Activated naive CD4-positive, alpha-beta T cell treated with anti-CD3 and anti-CD28 coated beads for 36 hours (primary cell): ENCODE measurements at regions of chrX and their contacts with region 1.

Region 1: DNA sequence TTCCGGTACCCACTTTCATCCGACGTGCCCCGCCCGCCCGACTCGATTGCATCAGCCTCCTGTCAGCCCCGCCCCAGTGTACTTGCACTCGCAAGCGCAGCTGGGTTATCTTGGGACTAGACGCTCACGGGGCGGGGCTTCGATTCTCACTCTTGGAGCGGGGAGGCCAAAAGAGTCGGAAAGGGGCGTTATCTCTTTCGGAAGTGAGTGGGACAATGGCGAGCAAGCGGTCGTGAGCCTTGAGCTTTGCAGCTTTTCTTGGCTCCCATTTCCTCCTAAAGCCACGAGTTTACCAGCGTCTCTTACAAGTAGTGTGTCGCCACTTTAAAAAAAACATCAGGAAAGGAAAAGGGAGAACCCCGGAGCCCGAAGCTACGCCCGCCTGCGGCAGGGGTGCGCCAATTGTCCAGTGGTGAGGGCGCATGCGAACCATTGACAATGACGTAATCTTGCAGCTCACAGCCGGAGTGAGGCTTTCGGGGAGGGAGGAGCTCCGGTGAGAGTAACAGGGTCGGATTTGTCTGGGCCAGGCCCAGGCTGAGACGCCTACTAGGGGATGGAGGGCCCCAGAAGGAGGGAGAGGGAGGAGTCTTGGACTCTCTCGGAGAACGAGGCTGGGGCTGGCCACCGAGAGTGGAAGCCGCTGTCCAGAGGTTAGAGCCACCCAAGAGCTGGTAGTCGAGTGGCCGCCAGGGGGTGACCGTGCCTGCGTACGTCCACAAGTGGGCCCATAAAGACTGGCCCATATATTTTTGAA is 109.5 kb downstream of the GNL3L start:
- DNase-seq: peak; percentile 97
- H3K4me3 Mint-ChIP-seq: peak overlapping the region; percentile 84
- H3K27ac Mint-ChIP-seq: peak overlapping the region; percentile 99
- H3K4me1 Mint-ChIP-seq: peaks cover 5% of the 10 kb centered on the region
- H3K27me3 Mint-ChIP-seq: no peaks in the 10 kb centered on the region

Region 2: GRCh38 chrX:53422086-53422860 is 1217.3 kb before region 1 on chrX and contains the start of gene SMC1A:
- CTCF ChIA-PET with region 1: no interaction called
- intact Hi-C with region 1: loop called (anchors 2 kb)
- DNase-seq: peak; percentile 97
- H3K4me3 Mint-ChIP-seq: peak within 1 kb of the TSS; percentile 88
- H3K27ac Mint-ChIP-seq: peak within 1 kb of the TSS; percentile 97
- H3K4me1 Mint-ChIP-seq: peaks cover 30% of the 10 kb centered on the region
- H3K27me3 Mint-ChIP-seq: no peaks in the 10 kb centered on the region
- total RNA-seq, gene SMC1A: 169 to 170 TPM

Region 3: GRCh38 chrX:54044126-54044876 is 595.2 kb before region 1 on chrX and contains the start of gene PHF8:
- CTCF ChIA-PET with region 1: no interaction called
- intact Hi-C with region 1: loop called (anchors 1 kb)
- DNase-seq: peak; percentile 95
- H3K4me3 Mint-ChIP-seq: peak within 1 kb of the TSS; percentile 89
- H3K27ac Mint-ChIP-seq: peak within 1 kb of the TSS; percentile 95
- H3K4me1 Mint-ChIP-seq: peaks cover 19% of the 10 kb centered on the region
- H3K27me3 Mint-ChIP-seq: no peaks in the 10 kb centered on the region
- total RNA-seq, gene PHF8: 51.7 to 53.2 TPM

Region 4: DNA sequence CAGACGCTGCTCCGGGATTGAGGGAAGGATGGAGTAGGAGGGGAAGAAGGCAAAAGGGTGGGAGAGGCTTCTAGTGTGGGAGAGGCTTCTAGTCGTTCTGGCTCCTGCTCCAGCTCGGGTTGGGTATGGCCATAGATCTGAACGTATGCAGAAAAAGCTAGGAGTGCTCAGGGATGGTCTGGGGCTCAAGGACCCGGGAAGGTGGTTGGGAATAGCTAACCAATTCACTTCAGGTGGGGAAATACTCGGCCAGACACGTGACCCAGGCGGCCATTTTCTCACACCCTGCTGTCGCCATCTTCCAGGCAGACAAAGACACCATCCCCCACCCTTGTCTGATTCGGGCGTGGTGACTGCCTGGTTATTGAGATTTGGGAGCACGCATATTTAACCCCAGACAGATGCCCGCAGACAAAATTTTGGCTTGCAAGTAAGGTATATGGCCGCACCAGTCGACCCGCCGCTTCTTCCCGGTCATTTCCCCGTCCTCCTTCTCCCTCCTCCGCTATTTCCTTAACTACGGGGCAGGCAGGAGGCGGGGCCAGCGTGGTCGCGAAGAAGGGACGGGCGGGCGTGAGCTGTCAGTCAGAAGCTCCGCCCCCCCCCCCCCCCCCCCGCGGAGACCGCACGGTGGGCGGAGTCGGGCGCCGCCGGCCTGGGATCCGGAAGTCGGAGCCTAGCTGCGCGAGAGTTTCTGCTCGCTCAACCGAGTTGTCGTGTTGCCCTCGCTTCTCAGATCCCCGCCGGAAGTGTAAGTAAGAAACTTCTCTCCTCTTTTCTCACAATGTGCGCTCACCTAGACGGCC is 109.8 kb before region 1 on chrX and contains the start of gene GNL3L:
- CTCF ChIA-PET with region 1: no interaction called
- intact Hi-C with region 1: loop called (anchors 1 kb)
- DNase-seq: peak; percentile 84
- H3K4me3 Mint-ChIP-seq: peak within 1 kb of the TSS; percentile 90
- H3K27ac Mint-ChIP-seq: peak within 1 kb of the TSS; percentile 98
- H3K4me1 Mint-ChIP-seq: peaks cover 31% of the 10 kb centered on the region
- H3K27me3 Mint-ChIP-seq: no peaks in the 10 kb centered on the region
- total RNA-seq, gene GNL3L: 47.6 to 47.9 TPM

Region 5: DNA sequence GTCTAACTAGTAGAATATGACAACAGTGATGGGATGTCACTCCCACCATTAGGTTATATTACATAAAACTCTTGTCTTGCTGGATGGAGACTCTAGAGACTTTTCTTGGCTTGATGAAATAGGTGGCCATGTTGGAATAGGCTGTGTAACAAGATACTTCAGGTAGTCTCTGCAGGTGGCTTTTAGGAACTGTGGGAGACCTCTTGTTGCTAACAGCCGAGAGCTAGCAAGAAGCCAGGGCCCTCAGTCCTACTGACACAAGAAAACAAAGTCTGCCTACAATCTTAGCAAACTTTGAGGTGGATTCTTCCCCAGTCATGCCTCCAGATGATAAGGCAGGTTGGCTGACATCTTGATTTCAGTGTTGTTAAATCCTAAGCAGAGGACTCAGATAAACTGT is 37.0 kb before region 1 on chrX:
- CTCF ChIA-PET with region 1: no interaction called
- intact Hi-C with region 1: no loop called
- DNase-seq: no peak
- H3K4me3 Mint-ChIP-seq: no peak overlapping the region
- H3K27ac Mint-ChIP-seq: no peak overlapping the region
- H3K4me1 Mint-ChIP-seq: no peaks in the 10 kb centered on the region
- H3K27me3 Mint-ChIP-seq: no peaks in the 10 kb centered on the region

Region 6: GRCh38 chrX:54921427-54922021 is 282.0 kb after region 1 on chrX:
- CTCF ChIA-PET with region 1: no interaction called
- intact Hi-C with region 1: loop called (anchors 2 kb)
- DNase-seq: peak; percentile 70
- H3K4me3 Mint-ChIP-seq: peak overlapping the region; percentile 87
- H3K27ac Mint-ChIP-seq: peak overlapping the region; percentile 73
- H3K4me1 Mint-ChIP-seq: peaks cover 8% of the 10 kb centered on the region
- H3K27me3 Mint-ChIP-seq: no peaks in the 10 kb centered on the region

Region 7: DNA sequence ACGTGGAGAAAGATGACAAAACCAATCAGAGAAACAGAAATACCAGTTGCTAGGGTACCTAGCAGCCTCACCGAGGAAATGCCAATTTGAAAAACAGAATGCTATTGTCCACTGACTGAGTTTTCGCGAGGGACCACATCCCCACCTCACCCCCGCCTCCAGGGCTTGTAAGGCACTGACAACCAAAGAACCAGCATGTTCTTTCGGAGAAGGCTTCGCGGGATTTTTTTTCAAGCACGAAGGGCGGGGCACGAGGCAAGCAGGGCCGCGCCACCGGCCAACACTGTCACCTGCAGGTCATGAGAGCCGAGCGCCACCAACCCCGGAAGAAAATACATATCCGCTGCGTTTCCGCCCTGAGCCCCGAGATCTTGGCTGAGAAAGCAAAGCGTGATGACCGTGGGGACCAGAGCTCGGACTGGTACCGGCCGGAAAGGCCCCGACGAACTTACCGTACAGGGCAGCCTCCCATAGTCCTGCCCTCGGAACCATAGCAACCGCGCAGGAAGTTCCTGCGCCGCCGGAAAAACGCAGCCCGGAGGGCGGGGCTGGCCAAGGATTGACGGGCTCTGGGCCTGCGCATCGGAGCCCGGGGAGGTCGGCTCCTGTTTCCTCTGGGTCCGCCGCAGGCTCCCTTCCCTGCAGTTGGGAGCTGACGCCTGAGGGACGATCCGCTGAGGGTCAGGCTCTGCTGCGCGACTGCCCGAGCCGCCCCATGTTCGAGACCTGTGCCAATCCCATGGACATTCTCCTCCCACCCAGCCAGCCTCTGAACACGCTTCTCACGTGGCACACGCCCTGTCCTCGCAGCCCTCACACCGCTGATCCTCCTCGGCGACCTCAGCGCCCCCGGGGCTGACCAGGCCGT is 521.4 kb after region 1 on chrX:
- CTCF ChIA-PET with region 1: no interaction called
- intact Hi-C with region 1: loop called (anchors 1 kb)
- DNase-seq: peak; percentile 92
- H3K4me3 Mint-ChIP-seq: peak overlapping the region; percentile 89
- H3K27ac Mint-ChIP-seq: peak overlapping the region; percentile 93
- H3K4me1 Mint-ChIP-seq: no peaks in the 10 kb centered on the region
- H3K27me3 Mint-ChIP-seq: no peaks in the 10 kb centered on the region